ENCODE measurements at regions of chr1 and their contacts with region 1.

Region 1: GRCh38 chr1:32291708-32292492 is at the start of gene HDAC1:
- DNase-seq: peak; percentile 93
- H3K4me3 ChIP-seq: peak within 1 kb of the TSS; percentile 50 to 71 (median 64)
- H3K27ac ChIP-seq: peak within 1 kb of the TSS; percentile 82
- H3K4me1 ChIP-seq: peaks cover 17% of the 10 kb centered on the region
- H3K27me3 ChIP-seq: no peaks in the 10 kb centered on the region
- CTCF ChIP-seq: no peak
- POLR2A ChIP-seq: peak; percentile 61
- total RNA-seq, gene HDAC1: 111 and 138 TPM in 2 replicates

Region 2: DNA sequence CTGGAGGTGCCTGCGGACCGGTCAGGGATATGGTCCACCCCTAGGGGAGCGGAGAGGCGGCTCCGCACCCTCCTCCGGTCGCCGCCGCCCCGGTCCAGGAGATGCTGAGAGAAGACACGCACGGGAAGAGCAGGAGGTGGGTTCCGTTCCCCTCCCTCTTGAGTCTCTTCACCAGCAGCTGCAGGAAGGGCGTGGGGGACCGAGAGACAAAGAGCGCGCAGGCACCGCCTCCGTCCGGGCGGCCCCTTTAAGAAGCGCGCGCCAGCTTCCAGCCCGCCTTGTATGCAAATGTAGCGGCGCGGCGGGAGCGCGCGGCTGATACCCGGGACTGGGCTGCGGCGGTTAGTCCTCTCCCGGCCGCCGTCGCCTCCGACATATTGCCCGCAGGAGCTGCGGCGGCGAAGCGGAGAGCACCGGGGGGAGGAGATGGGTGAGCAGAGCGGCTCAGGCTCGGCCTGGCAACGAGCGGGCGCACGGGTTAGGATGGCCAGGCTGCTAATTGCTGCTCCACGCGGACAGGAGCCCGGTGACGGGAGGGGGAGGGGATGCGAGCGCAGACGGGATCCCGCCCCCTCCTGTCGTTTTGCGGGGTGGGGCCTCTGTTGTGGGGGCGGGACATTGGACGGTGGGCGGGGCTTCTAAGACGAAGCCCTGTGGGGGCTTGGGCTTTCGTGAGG is 219.1 kb before region 1 on chr1 and contains the start of gene TMEM39B:
- CTCF ChIA-PET with region 1: no interaction called
- POLR2A ChIA-PET with region 1: no interaction called
- dilution Hi-C with region 1: no loop called
- intact Hi-C with region 1: no loop called
- DNase-seq: peak; percentile 94
- H3K4me3 ChIP-seq: peak within 1 kb of the TSS; percentile 74 to 78 (median 77)
- H3K27ac ChIP-seq: peak within 1 kb of the TSS; percentile 93
- H3K4me1 ChIP-seq: peaks cover 43% of the 10 kb centered on the region
- H3K27me3 ChIP-seq: no peaks in the 10 kb centered on the region
- CTCF ChIP-seq: no peak
- POLR2A ChIP-seq: peak; percentile 76
- total RNA-seq, gene TMEM39B: 43.7 and 47.3 TPM in 2 replicates

Region 3: DNA sequence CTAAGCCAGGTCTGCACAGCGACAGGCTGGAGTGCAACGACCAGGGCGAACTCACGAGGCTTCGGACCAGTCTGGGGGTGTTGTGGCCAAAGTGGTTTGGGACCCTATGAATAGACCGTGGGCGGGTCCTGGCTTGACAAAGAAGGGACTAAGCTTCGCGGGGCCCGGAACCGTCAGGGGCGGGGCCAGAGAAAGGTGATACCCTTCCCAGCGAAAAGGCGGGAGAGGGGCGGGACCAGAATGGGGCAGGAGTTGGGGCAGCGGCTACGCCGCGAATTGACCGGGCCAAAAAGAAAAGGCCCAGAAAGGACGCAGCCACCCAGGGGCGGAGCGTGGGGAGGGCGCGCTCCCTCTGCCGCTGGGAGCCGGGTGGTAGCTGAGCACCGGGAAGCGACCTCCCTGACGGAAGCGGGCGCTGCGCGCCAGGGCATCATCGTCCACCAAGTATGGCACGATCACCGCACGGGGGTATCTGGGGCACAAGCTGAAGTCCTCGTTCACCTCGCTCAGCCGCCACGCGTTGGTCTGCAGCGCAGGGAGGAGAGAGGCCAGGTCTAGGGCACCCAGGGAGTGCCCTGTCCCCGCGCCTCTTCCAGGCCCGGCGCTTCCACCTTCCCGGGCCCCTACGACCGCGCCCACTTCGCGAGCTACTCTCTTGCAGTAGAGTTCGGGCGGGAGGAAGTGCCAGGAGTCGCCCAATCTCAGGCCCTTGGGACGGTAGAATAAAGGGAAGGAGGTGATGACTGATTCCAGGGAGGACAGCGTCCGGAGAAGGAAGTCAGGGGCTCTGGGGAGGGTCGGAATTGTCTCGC is 51.6 kb before region 1 on chr1:
- CTCF ChIA-PET with region 1: interaction called, 6 read pairs
- POLR2A ChIA-PET with region 1: interaction called, 3 read pairs
- dilution Hi-C with region 1: no loop called
- intact Hi-C with region 1: loop called (anchors 2 kb)
- DNase-seq: peak; percentile 35
- H3K4me3 ChIP-seq: peak overlapping the region; percentile 50 to 81 (median 76)
- H3K27ac ChIP-seq: peak overlapping the region; percentile 70
- H3K4me1 ChIP-seq: peaks cover 32% of the 10 kb centered on the region
- H3K27me3 ChIP-seq: no peaks in the 10 kb centered on the region
- CTCF ChIP-seq: peak in 1 of 2 donors; percentile 36
- POLR2A ChIP-seq: peak; percentile 58

Region 4: GRCh38 chr1:32247983-32248889 is 43.7 kb before region 1 on chr1:
- CTCF ChIA-PET with region 1: interaction called, 11 read pairs
- POLR2A ChIA-PET with region 1: interaction called, 3 read pairs
- dilution Hi-C with region 1: no loop called
- intact Hi-C with region 1: loop called (anchors 1 kb)
- DNase-seq: peak; percentile 74
- H3K4me3 ChIP-seq: peak overlapping the region in 1 of 3 experiments; percentile 29
- H3K27ac ChIP-seq: peak overlapping the region; percentile 60
- H3K4me1 ChIP-seq: peaks cover 47% of the 10 kb centered on the region
- H3K27me3 ChIP-seq: no peaks in the 10 kb centered on the region
- CTCF ChIP-seq: peak; percentile 96 to 98
- POLR2A ChIP-seq: no peak

Region 5: DNA sequence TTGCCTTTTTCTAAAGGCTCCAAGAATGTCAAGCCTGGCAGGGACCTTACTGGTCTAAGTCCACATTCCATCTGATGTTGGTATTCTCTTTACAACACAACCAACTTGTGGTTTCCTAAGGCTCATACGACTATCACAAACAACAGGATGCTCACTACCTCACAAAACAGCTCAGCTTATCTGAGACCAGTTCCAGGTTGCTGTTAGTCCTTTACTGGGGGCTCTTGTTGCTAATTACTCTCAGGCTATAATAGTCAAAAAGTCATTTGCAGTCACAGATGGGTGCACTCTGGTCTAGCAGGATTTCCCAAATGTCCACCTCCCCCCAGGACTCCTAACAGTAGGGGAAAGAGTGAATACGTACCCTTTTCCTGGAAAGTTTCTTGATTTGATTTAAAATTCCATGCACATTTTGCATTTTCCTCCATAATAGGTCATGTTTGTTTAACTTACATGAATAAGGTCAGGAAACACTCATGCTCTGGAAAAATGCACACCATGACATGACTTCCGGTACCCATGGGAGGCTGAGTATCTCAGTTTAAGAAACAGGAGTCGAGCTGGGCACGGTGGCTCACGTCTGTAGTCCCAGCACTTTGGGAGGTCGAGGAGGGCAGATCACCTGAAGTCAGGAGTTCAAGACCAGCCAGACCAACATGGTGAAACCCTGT is 24.8 kb before region 1 on chr1:
- CTCF ChIA-PET with region 1: interaction called, 3 read pairs
- POLR2A ChIA-PET with region 1: interaction called, 4 read pairs
- dilution Hi-C with region 1: no loop called
- intact Hi-C with region 1: loop called (anchors 1 kb)
- DNase-seq: peak; percentile 95
- H3K4me3 ChIP-seq: peak overlapping the region in 1 of 3 experiments; percentile 15
- H3K27ac ChIP-seq: peak overlapping the region; percentile 83
- H3K4me1 ChIP-seq: peaks cover 5% of the 10 kb centered on the region
- H3K27me3 ChIP-seq: no peaks in the 10 kb centered on the region
- CTCF ChIP-seq: no peak
- POLR2A ChIP-seq: no peak

Region 6: GRCh38 chr1:32345289-32345827 is 53.5 kb after region 1 on chr1:
- CTCF ChIA-PET with region 1: no interaction called
- POLR2A ChIA-PET with region 1: no interaction called
- dilution Hi-C with region 1: no loop called
- intact Hi-C with region 1: no loop called
- DNase-seq: peak; percentile 56
- H3K4me3 ChIP-seq: no peak overlapping the region
- H3K27ac ChIP-seq: no peak overlapping the region
- H3K4me1 ChIP-seq: peaks cover 22% of the 10 kb centered on the region
- H3K27me3 ChIP-seq: no peaks in the 10 kb centered on the region
- CTCF ChIP-seq: no peak
- POLR2A ChIP-seq: no peak